ENCODE measurements at regions of chr15 and their contacts with region 1.

Region 1: DNA sequence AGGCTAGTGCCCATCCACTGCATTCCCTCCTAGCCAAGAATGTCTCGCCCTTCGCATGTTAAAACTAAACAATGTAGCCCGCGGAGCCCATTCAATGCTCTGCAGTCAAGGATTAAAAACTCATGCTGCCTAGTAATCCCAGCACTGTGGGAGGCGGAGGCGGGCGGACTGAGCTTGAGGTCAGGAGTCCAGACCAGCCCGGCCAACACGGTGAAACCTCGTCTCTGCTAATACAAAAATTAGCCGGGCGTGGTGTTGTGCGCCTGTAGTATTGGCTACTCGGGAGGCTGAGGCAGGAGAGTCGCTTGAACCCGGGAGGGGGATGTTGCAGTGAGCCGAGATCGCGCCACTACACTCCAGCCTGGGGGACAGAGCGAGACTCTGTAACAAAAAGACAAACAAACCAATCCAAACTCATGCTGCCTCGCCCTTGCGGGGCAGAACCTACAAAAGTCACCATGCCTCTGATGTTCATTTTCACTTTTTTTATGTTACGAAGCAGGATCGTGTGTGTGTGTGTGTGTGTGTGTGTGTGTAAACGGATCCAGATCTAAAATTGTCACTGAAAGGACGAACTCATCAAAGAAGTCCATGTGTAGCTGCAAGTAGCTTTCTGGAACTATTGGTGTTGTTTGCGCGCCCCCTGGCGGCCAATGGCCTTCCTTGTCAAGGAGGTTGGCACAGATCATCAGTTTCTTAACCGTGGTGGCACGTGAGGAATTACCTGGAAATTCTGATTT is 54.8 kb upstream of the SPESP1 start:
- DNase-seq: peak; percentile 91 to 97
- H3K4me3 ChIP-seq: peak overlapping the region; percentile 24 to 65 (median 50); a peak in 7 of 8 replicates
- H3K27ac ChIP-seq: no peak overlapping the region
- H3K4me1 ChIP-seq: peaks cover 2 to 3% (median 2%) of the 10 kb centered on the region in 4 experiments; a peak in 4 of 7 replicates
- H3K27me3 ChIP-seq: peaks cover 0 to 8% (median 1%) of the 10 kb centered on the region in 4 experiments; a peak in 4 of 7 replicates
- CTCF ChIP-seq: peak; percentile 83 to 90 (median 89)
- EP300 ChIP-seq: no peak
- POLR2A ChIP-seq: no peak; a peak in 1 of 3 replicates
- RAD21 ChIP-seq: peak; percentile 94 to 95

Region 2: GRCh38 chr15:68730471-68730919 is 145.1 kb before region 1 on chr15:
- CTCF ChIA-PET with region 1: interaction called, 38 read pairs
- POLR2A ChIA-PET with region 1: interaction called, 4 read pairs
- DNase-seq: peak; percentile 19 to 54
- H3K4me3 ChIP-seq: no peak overlapping the region
- H3K27ac ChIP-seq: no peak overlapping the region
- H3K4me1 ChIP-seq: peaks cover 0 to 7% (median 4%) of the 10 kb centered on the region in 4 experiments; a peak in 5 of 7 replicates
- H3K27me3 ChIP-seq: no peaks in the 10 kb centered on the region; a peak in 1 of 7 replicates
- CTCF ChIP-seq: peak in 2 of 3 experiments; percentile 56 to 61; a peak in 3 of 4 replicates
- EP300 ChIP-seq: no peak
- POLR2A ChIP-seq: no peak
- RAD21 ChIP-seq: peak; percentile 74 to 79

Region 3: GRCh38 chr15:68783226-68784058 is 92.1 kb before region 1 on chr15:
- CTCF ChIA-PET with region 1: interaction called, 70 read pairs
- POLR2A ChIA-PET with region 1: interaction called, 5 read pairs
- DNase-seq: peak in 1 of 2 experiments; percentile 82
- H3K4me3 ChIP-seq: no peak overlapping the region
- H3K27ac ChIP-seq: no peak overlapping the region
- H3K4me1 ChIP-seq: peaks cover 0 to 12% (median 4%) of the 10 kb centered on the region in 4 experiments; a peak in 5 of 7 replicates
- H3K27me3 ChIP-seq: no peaks in the 10 kb centered on the region
- CTCF ChIP-seq: peak; percentile 77 to 79 (median 79)
- EP300 ChIP-seq: no peak
- POLR2A ChIP-seq: no peak
- RAD21 ChIP-seq: peak; percentile 84 to 86

Region 4: DNA sequence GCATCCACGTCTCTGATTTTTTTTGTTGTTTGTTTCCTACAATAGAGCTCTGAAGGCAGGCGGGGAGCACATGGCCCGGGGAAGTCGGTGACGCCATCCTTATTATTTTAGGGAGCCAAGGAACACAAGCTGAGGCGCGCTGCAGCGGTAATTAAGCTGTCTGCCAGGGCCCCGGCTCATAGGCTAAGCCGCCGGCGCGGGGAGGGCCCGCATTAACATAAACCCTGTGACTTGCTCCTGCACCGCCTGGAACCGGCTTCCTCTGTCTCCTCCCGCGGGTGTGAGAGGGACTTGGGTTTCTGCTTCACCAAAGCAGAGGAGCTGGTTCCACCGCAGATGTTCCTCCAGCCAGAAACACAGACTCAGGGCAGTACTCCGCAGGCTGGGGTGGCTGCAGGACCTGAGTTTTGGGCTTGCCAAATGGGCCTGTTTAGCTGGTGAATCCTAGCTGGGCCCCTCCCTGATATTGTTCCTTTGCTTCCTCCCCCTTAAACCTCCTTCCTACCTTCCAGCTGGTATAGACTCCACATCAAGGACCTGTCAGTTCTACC is 80.2 kb before region 1 on chr15:
- CTCF ChIA-PET with region 1: interaction called, 18 read pairs
- POLR2A ChIA-PET with region 1: interaction called, 3 read pairs
- DNase-seq: peak; percentile 72 to 82
- H3K4me3 ChIP-seq: peak overlapping the region in 3 of 4 experiments; percentile 1 to 32 (median 7); a peak in 4 of 8 replicates
- H3K27ac ChIP-seq: peak overlapping the region; percentile 61
- H3K4me1 ChIP-seq: peaks cover 22 to 51% (median 40%) of the 10 kb centered on the region in 4 experiments
- H3K27me3 ChIP-seq: no peaks in the 10 kb centered on the region; a peak in 1 of 7 replicates
- CTCF ChIP-seq: no peak
- EP300 ChIP-seq: no peak
- POLR2A ChIP-seq: peak in 1 of 2 experiments; percentile 77; a peak in 2 of 3 replicates
- RAD21 ChIP-seq: no peak

Region 5: DNA sequence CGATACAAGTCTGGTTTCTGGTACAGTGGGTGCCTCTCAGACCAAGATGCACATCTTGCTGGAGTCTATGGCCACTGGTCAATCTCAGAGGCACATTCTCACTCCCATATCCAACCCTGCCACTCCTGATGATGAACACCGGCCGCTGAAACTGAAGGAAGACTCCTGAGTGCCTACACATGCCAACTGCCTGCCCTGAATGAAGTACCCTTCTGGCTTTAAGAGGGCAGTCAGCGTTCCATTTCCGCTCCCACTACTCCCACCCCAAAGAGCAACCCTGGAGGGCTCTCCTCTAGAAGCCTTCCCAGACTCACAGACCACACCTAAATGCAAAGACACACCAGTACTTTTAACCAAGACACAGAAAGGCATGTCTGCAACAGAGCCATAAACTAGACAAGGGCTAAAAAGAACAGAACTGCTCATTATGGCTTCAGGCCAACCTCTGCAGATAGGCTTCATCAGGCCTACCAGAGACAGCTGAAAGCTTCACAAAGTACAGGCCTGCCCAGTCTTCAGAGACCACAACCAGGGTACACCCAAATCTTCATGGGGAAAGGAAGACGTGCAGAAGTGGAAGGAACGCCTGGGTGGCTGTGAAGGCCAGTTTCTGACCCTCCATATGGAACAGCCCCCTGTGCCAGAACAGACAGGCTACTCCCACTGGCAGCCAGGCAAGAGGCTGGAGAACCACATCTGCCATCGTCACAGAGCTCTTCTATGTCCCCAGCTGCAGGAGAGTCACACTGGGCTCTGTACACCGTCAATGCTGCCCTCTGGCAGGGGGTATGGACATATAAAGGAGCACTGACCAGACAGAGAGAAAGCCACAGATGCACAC is 69.1 kb before region 1 on chr15:
- CTCF ChIA-PET with region 1: interaction called, 16 read pairs
- POLR2A ChIA-PET with region 1: no interaction called
- DNase-seq: peak in 1 of 2 experiments; percentile 39
- H3K4me3 ChIP-seq: no peak overlapping the region
- H3K27ac ChIP-seq: no peak overlapping the region
- H3K4me1 ChIP-seq: peaks cover 5 to 14% (median 11%) of the 10 kb centered on the region in 4 experiments; a peak in 6 of 7 replicates
- H3K27me3 ChIP-seq: no peaks in the 10 kb centered on the region
- CTCF ChIP-seq: no peak
- EP300 ChIP-seq: no peak
- POLR2A ChIP-seq: no peak
- RAD21 ChIP-seq: no peak

Region 6: DNA sequence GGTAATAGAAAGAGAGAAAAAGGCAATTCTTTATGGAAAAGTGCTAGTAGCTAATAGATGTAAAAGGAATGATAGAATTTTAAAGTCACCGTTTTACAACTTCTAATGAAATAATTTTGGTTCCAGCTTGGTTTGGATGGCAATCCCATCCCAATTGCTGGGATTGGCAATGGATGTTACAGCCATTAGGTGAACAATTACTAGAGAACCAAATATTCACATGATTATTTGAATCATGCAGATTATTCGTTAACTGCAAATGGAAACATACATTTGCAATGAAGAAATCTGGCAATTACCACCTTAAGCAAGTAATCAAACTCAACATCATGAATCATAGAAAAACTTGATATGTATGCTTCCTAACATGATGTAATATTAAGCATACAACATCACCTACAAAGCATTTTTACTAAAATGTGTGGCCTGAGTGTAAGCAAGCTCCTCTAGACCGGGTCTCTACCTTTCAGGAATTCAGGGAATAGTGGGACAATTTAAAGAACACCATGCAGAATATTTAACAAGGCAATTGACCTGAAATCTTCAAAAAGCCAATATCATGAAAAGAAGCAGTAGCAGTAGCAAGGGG is 28.6 kb before region 1 on chr15:
- CTCF ChIA-PET with region 1: interaction called, 14 read pairs
- POLR2A ChIA-PET with region 1: no interaction called
- DNase-seq: no peak
- H3K4me3 ChIP-seq: no peak overlapping the region
- H3K27ac ChIP-seq: no peak overlapping the region
- H3K4me1 ChIP-seq: no peaks in the 10 kb centered on the region; a peak in 1 of 7 replicates
- H3K27me3 ChIP-seq: peaks cover 0 to 7% (median 1%) of the 10 kb centered on the region in 4 experiments; a peak in 4 of 7 replicates
- CTCF ChIP-seq: no peak
- EP300 ChIP-seq: no peak
- POLR2A ChIP-seq: no peak
- RAD21 ChIP-seq: no peak

Region 7: GRCh38 chr15:69114331-69114928 is 238.9 kb after region 1 on chr15:
- CTCF ChIA-PET with region 1: no interaction called
- POLR2A ChIA-PET with region 1: no interaction called
- DNase-seq: no peak
- H3K4me3 ChIP-seq: no peak overlapping the region
- H3K27ac ChIP-seq: no peak overlapping the region
- H3K4me1 ChIP-seq: peaks cover 23 to 36% (median 26%) of the 10 kb centered on the region in 4 experiments
- H3K27me3 ChIP-seq: peaks cover 0 to 17% (median 11%) of the 10 kb centered on the region in 4 experiments; a peak in 4 of 7 replicates
- CTCF ChIP-seq: no peak
- EP300 ChIP-seq: no peak
- POLR2A ChIP-seq: no peak
- RAD21 ChIP-seq: no peak